ENCODE measurements at regions of chr3 and their contacts with region 1.

Region 1: DNA sequence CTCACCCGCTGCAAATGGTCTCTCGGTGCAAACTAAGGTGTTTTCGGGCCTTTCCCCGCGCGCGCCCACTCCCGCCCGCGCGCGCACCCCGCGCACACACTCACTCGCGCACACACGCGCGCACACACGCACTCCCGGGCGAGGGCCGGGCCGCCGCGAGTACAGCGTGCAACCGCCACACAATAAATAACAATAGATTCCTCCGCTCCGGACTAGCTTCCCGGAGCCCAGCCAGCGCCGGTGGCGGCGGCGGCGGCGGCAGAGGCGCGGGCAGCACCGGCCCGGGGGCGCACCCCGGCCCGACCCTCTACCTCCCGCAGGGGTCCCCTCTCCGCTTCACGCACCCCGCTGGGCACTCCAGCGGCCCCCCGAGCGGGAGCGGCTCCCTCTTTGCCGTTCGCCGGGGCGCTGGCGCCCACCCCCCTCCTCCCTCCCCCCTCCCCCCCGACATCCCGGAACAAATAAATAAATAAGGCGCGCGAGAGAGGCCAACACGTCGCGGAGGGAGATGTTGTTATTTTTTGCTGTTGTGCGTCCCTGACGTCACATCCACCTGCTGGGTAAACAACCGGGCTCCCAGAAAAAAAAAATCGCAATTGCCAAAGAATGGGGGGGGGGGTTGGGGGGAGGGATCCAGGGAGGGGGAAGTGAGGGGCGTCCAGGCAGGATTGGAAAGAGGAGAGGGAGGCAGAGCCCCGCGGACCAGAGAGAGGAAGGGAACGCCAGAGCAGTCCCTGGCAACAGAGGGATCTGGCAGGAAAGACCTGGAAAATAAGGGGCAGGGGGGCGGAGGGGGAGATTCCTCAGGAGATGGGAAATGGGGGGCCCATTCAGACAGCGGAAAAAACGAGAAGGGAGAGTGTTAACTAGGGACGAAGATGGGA is at the start of gene FOXP1:
- DNase-seq: peak; percentile 81
- ATAC-seq: peak; percentile 75 to 84
- total RNA-seq, gene FOXP1: 42.1 to 50.0 TPM

Region 2: DNA sequence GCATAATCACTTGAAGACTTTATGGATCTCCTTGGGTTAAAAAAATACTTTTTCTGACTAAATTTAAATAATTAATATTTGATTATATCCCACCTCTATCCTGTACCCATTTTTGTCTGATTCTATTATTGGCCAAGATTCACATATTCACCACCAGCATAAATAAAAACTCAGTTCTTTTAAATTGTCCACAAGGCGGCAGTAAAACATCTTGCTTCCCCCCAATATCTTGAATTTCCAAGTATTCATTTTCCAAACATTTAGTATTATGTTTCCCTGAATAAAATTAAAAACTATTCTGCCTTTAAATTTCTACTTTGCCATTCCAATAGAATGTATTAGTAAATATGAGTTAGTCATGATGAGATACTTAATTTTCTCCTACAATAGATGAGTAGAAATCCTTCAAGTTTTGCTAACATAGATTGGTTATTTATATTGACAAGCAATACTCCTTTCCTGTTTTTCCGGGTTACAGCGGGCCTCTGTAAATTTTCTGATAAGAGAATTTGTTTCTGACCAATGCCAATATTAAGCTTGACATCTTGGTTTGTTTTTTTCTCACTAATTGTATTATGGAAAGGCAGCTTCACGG is 1052.6 kb before region 1 on chr3:
- intact Hi-C with region 1: loop called in 1 of 2 experiments (anchors 10 kb)
- DNase-seq: no peak
- ATAC-seq: no peak

Region 3: GRCh38 chr3:71006810-71007785 is 576.7 kb before region 1 on chr3:
- intact Hi-C with region 1: loop called in 1 of 2 experiments (anchors 10 kb)
- DNase-seq: no peak
- ATAC-seq: peak in 1 of 2 donors; percentile 60

Region 4: DNA sequence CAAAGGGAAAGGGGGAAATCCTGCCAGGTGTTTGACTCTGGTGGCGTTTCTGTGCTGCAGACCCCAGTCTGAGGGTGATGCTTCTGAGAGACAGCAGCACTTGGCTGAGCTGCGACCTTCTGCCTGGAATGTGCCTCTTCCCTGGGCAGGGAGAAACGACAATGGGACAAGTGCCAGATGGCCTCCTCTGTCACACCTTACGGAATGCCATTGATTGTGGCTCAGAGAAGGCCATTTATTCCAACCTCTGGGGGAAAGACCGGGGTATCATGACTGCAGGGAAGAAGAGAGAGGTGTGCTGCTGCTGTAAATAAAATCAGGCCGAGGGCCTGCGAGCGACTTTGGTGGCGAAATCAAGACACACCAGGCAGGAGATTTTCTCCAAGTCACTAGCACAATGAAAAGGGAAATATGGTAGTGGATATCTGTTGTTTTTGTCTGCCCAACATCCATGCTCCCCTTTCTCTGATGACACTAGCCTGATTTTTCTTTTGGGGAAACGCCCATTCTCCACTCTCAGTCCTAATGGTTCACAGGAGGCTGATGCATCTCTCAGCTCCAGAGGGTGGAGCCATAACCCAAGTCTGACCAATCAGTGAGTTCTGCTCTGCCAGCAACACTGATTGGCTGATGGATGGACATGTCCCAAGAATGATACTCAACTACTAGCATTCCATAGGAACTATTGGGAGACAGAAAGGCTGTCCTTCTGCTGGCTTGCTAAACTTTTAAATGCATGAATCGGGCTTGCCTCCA is 336.4 kb before region 1 on chr3:
- intact Hi-C with region 1: loop called in 1 of 2 experiments (anchors 10 kb)
- DNase-seq: peak; percentile 44
- ATAC-seq: peak; percentile 42 to 59

Region 5: DNA sequence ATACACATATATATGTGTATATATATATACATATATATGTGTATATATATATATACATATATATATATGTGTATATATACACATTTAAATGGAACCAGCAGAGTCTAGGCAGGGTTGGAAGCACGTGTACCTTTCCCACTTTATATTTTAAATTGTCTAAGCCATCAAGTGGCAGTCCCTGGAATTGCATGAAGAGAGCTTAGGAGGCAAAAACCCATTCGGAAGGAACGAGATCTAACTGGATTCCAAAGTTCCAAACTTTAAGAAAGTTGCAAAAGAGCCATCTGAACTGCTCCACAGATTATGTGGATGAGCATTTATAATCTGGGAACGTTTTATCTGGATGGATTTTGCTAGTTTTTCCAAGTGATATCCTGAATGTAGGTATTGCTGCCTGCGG is 186.8 kb before region 1 on chr3:
- intact Hi-C with region 1: loop called in 1 of 2 experiments (anchors 10 kb)
- DNase-seq: no peak
- ATAC-seq: peak in 1 of 2 donors; percentile 36

Region 6: GRCh38 chr3:71984843-71985613 is 401.2 kb after region 1 on chr3:
- intact Hi-C with region 1: no loop called
- DNase-seq: no peak
- ATAC-seq: no peak

Measured in left cardiac atrium (tissue), 4 donors.